Posterior vena cava (tissue), 2 donors: ENCODE measurements at regions of chr2 and their contacts with region 1.

Region 1: GRCh38 chr2:53188851-53189510 is 578.6 kb upstream of the CHAC2 start:
- DNase-seq: no peak

Region 2: GRCh38 chr2:52779446-52779845 is 409.5 kb before region 1 on chr2:
- intact Hi-C with region 1: no loop called
- DNase-seq: no peak

Region 3: DNA sequence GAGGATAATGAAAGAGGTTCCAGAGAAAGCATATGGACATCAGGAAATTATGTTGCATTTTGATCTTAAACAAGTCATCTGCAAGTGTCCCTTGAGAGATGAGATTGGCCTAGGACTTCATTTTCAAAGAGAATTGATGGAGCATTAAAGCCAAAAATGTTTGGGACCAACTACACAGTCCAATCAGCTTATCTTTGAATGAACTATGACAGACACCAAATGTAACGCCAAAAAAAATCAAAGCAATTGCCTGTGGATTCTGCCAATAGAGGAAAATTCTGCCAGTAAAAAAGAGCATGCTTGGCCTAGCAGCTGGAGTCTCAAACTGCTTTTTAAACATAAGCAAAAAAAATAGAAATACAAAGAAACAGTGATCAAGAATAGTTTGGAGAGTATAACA is 15.9 kb before region 1 on chr2:
- intact Hi-C with region 1: no loop called
- DNase-seq: no peak

Region 4: DNA sequence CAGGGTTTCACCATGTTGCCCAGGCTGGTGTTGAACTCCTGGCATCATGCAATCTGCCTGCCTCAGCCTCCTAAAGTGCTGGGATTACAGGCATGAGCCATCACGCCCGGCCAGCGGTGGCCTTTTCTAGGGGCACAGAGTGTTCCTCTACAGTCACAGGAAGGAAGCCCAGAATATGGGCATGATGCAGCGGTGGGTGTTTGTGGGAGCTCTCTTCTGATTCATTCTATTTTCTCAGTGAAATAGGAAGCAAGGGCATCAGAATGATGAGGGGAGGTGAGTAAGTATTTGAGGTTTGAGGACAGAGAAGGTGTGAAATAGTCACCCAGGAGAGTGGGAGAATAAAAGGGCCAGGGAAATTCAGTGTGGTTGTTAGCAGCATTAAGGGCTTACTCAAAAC is 852.2 kb after region 1 on chr2:
- intact Hi-C with region 1: loop called in 1 of 2 experiments (anchors 5 kb)
- DNase-seq: no peak